ENCODE measurements at regions of chr9 and their contacts with region 1.

Region 1: GRCh38 chr9:34591248-34591916 is 1.9 kb upstream of the CNTFR start:
- DNase-seq: peak; percentile 59 to 86 (median 80)
- ATAC-seq: peak; percentile 83
- H3K4me3 ChIP-seq: peak overlapping the region; percentile 54 to 73
- H3K4me3 Mint-ChIP-seq: peak overlapping the region; percentile 78
- H3K27ac ChIP-seq: no peak overlapping the region
- H3K27ac Mint-ChIP-seq: no peak overlapping the region
- H3K4me1 ChIP-seq: peaks cover 9% of the 10 kb centered on the region
- H3K4me1 Mint-ChIP-seq: peaks cover 32% of the 10 kb centered on the region
- H3K27me3 ChIP-seq: peaks cover 26 to 47% of the 10 kb centered on the region in 2 experiments
- H3K27me3 Mint-ChIP-seq: peaks cover 70% of the 10 kb centered on the region
- CTCF ChIP-seq: peak; percentile 74

Region 2: GRCh38 chr9:34546834-34547827 is 44.3 kb before region 1 on chr9:
- CTCF ChIA-PET with region 1: no interaction called
- POLR2A ChIA-PET with region 1: no interaction called
- intact Hi-C with region 1: loop called (anchors 1 to 2 kb)
- DNase-seq: peak in 7 of 9 experiments; percentile 22 to 55 (median 48)
- ATAC-seq: peak; percentile 56
- H3K4me3 ChIP-seq: no peak overlapping the region
- H3K4me3 Mint-ChIP-seq: no peak overlapping the region
- H3K27ac ChIP-seq: no peak overlapping the region
- H3K27ac Mint-ChIP-seq: no peak overlapping the region
- H3K4me1 ChIP-seq: no peaks in the 10 kb centered on the region
- H3K4me1 Mint-ChIP-seq: no peaks in the 10 kb centered on the region
- H3K27me3 ChIP-seq: no peaks in the 10 kb centered on the region
- H3K27me3 Mint-ChIP-seq: peaks cover 22% of the 10 kb centered on the region
- CTCF ChIP-seq: peak; percentile 31

Region 3: GRCh38 chr9:34579104-34579807 is 12.1 kb before region 1 on chr9:
- CTCF ChIA-PET with region 1: interaction called, 15 read pairs
- POLR2A ChIA-PET with region 1: no interaction called
- intact Hi-C with region 1: no loop called
- DNase-seq: no peak
- ATAC-seq: no peak
- H3K4me3 ChIP-seq: no peak overlapping the region
- H3K4me3 Mint-ChIP-seq: no peak overlapping the region
- H3K27ac ChIP-seq: no peak overlapping the region
- H3K27ac Mint-ChIP-seq: no peak overlapping the region
- H3K4me1 ChIP-seq: peaks cover 8% of the 10 kb centered on the region
- H3K4me1 Mint-ChIP-seq: peaks cover 15% of the 10 kb centered on the region
- H3K27me3 ChIP-seq: peaks cover 20 to 26% of the 10 kb centered on the region in 2 experiments
- H3K27me3 Mint-ChIP-seq: peaks cover 69% of the 10 kb centered on the region
- CTCF ChIP-seq: no peak